RWPE1 (cell line): ENCODE measurements at regions of chr16 and their contacts with region 1.

Region 1: GRCh38 chr16:10509534-10510025 is 70.8 kb downstream of the EMP2 start:
- DNase-seq: peak; percentile 80
- H3K27ac ChIP-seq: no peak overlapping the region
- CTCF ChIP-seq: peak; percentile 79

Region 2: DNA sequence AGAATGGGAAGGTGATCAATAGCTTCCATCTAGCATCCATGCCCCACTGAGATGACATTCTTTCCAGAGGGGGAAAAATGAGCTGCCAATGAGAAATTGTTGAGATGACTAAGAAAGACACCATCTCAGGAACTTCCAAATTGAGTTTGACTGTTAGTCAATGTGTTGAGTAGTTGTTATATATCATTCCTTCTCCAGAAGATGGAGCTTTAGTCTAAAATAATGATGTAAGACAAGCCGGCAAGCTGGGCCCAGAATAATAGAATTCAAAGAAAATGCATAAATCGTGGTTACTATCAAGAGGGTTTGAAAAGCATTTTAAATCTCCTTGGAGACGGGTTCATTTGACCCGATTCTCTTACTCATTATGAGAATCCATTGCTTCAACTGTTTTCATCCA is 194.8 kb before region 1 on chr16:
- CTCF ChIA-PET with region 1: interaction called, 21 read pairs
- POLR2A ChIA-PET with region 1: interaction called, 5 read pairs
- DNase-seq: peak; percentile 38
- H3K27ac ChIP-seq: no peak overlapping the region
- CTCF ChIP-seq: peak; percentile 38

Region 3: DNA sequence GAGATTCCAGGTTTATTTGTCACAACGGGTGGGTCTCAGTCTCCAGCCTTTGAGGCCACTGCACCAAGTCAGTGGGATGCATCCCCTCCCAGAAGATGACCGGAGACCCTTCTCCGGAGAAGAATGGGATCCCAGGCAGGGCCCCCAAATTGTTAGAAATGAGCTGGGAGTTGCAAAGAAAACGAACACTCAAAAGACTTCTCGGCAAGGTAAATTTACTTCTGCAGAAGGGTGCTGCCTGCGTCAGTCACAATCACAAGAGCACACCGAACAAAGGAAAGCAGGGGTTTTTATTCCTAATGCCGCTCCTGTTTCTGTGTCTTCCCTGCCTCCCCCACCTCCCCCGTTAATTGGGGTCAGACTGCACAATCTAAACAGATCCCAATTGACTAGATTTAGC is 62.3 kb before region 1 on chr16:
- CTCF ChIA-PET with region 1: no interaction called
- POLR2A ChIA-PET with region 1: no interaction called
- DNase-seq: no peak
- H3K27ac ChIP-seq: no peak overlapping the region
- CTCF ChIP-seq: no peak

Region 4: GRCh38 chr16:10473246-10473645 is 36.3 kb before region 1 on chr16:
- CTCF ChIA-PET with region 1: no interaction called
- POLR2A ChIA-PET with region 1: no interaction called
- DNase-seq: no peak
- H3K27ac ChIP-seq: no peak overlapping the region
- CTCF ChIP-seq: no peak

Region 5: GRCh38 chr16:10616730-10617555 is 107.4 kb after region 1 on chr16:
- CTCF ChIA-PET with region 1: interaction called, 10 read pairs
- POLR2A ChIA-PET with region 1: no interaction called
- DNase-seq: peak; percentile 76
- H3K27ac ChIP-seq: peak overlapping the region; percentile 92
- CTCF ChIP-seq: peak; percentile 26; the same call in 1 of the 2 replicates

Region 6: DNA sequence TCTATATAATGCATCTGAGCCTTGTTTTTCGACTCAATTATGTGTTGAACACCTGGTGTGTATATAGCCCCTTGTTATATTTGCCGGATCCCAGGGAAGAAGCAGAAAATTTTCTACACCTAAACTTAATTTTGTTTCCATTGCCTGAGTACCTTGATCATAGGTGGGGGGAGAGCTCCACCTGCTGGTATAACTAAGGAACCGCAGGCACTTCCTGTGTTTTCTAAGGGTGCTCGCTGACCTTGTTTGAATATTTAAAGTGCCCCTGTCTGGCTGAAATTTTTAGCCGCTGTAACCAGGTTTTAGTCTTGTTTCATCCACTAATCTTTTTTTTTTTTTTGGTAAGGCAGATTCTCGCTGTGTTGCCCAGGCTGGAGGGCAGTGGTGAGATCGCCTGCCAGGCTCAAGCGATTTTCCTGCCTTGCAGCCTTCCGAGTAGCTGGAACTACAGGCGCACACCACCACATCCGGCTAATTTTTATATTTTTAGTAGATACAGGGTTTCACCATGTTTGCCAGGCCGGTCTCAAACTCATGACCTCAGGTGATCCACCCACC is 227.6 kb after region 1 on chr16:
- CTCF ChIA-PET with region 1: interaction called, 21 read pairs
- POLR2A ChIA-PET with region 1: interaction called, 8 read pairs
- DNase-seq: peak; percentile 65
- H3K27ac ChIP-seq: no peak overlapping the region
- CTCF ChIP-seq: peak; percentile 87

Region 7: DNA sequence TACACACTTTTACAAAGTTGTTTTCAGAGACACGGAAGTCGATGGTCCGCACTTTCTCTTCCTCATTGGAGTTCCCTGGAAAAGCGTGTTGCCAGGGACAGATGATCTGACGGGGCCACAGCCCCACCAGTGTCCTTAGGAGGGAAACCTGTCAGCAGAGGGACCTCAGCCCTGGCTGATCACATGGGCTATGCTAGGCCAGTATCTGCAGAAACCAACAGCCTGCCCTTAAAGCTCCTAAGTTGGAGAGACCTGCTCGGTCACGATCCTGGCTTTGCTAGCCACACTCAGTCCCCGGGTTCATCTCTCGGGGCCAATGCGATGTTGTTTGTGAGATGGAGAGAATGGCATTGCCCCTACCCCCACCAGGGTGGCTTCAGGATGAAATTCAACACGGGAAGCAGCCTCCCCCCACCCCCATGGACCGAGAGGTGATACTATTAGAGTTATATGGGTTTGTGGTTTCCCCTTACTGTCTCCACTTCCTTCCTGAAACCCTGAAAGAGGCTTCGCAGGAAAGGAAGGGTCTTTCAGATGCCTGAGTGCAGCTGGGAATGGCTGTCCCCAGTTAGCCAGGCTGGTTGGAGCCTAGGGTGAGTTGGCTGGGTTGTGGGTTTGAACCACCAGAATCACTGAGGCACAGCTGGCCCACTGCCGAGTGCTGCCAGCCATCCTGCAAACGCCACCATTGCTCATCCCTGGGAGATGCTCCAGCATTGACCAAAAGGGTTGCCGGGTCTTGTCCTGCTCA is 852.3 kb after region 1 on chr16:
- CTCF ChIA-PET with region 1: no interaction called
- POLR2A ChIA-PET with region 1: no interaction called
- DNase-seq: no peak
- H3K27ac ChIP-seq: no peak overlapping the region
- CTCF ChIP-seq: no peak